ENCODE measurements at regions of chr18 and their contacts with region 1.

Region 1: GRCh38 chr18:63267975-63268721 is 51.4 kb downstream of the BCL2 start:
- DNase-seq: no peak

Region 2: DNA sequence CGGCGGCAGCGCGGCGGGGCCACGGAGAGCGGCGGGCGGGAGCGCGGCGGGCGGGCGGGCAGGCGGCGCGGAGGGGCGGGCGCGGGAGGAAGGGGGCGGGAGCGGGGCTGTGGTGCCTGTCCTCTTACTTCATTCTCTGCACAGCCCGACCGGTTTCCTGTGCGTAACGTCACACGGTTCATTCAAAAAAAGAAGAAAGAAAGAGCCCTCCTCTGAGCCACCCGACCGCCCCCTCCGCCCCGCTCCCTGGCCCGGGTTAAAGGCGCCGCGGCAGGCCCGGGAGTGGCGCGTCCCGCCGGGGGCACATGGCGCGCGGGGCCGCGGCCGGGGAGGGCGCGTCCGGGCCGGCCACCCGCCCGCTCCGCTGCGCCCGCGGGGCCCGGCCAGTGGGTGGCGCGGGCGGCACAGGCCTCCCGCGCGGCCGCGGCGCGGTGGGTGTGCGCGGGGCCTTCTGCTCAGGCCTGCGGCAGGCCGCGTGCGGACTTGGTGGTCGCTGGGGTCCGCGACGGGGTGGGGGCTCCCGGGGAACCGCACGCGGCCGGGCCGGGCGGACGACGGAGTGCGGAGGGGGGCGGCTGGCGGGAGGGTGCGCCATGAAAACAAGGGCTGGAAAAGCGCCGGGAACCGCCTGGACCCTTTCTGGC is 52.0 kb after region 1 on chr18:
- intact Hi-C with region 1: loop called in 1 of 2 experiments (anchors 10 kb)
- DNase-seq: peak; percentile 94

Region 3: GRCh38 chr18:63487676-63488075 is 219.5 kb after region 1 on chr18:
- intact Hi-C with region 1: no loop called
- DNase-seq: no peak